ENCODE measurements at regions of chr5 and their contacts with region 1.

Region 1: GRCh38 chr5:179795863-179796833 is 2.4 kb downstream of the LTC4S start:
- DNase-seq: no peak
- H3K4me3 ChIP-seq: peak overlapping the region; percentile 48 to 70 (median 58)
- H3K27ac ChIP-seq: peak overlapping the region; percentile 81 to 93 (median 86)
- H3K4me1 ChIP-seq: peaks cover 41 to 67% (median 43%) of the 10 kb centered on the region in 3 donors
- H3K27me3 ChIP-seq: no peaks in the 10 kb centered on the region
- CTCF ChIP-seq: peak; percentile 64 to 97 (median 91)
- POLR2A ChIP-seq: peak in 2 of 4 donors; percentile 36 to 45

Region 2: GRCh38 chr5:179907570-179908324 is 111.6 kb after region 1 on chr5 and contains the start of gene TBC1D9B:
- intact Hi-C with region 1: loop called (anchors 5 kb)
- DNase-seq: no peak
- H3K4me3 ChIP-seq: peak within 1 kb of the TSS; percentile 49 to 81 (median 70)
- H3K27ac ChIP-seq: peak within 1 kb of the TSS; percentile 80 to 91 (median 89)
- H3K4me1 ChIP-seq: peaks cover 18 to 35% (median 19%) of the 10 kb centered on the region in 3 donors
- H3K27me3 ChIP-seq: no peaks in the 10 kb centered on the region
- CTCF ChIP-seq: peak in 5 of 6 experiments; percentile 23 to 65 (median 60)
- POLR2A ChIP-seq: peak in 2 of 4 donors; percentile 22 to 43
- total RNA-seq, gene TBC1D9B: 50.7 to 78.5 (median 62.4) TPM

Region 3: GRCh38 chr5:180018347-180019060 is 222.4 kb after region 1 on chr5:
- intact Hi-C with region 1: no loop called
- DNase-seq: no peak
- H3K4me3 ChIP-seq: no peak overlapping the region
- H3K27ac ChIP-seq: no peak overlapping the region
- H3K4me1 ChIP-seq: no peaks in the 10 kb centered on the region
- H3K27me3 ChIP-seq: no peaks in the 10 kb centered on the region
- CTCF ChIP-seq: no peak
- POLR2A ChIP-seq: no peak

Measured in esophagus squamous epithelium (tissue), 5 donors.